Prostate gland (tissue), 2 donors: ENCODE measurements at regions of chr12 and their contacts with region 1.

Region 1: DNA sequence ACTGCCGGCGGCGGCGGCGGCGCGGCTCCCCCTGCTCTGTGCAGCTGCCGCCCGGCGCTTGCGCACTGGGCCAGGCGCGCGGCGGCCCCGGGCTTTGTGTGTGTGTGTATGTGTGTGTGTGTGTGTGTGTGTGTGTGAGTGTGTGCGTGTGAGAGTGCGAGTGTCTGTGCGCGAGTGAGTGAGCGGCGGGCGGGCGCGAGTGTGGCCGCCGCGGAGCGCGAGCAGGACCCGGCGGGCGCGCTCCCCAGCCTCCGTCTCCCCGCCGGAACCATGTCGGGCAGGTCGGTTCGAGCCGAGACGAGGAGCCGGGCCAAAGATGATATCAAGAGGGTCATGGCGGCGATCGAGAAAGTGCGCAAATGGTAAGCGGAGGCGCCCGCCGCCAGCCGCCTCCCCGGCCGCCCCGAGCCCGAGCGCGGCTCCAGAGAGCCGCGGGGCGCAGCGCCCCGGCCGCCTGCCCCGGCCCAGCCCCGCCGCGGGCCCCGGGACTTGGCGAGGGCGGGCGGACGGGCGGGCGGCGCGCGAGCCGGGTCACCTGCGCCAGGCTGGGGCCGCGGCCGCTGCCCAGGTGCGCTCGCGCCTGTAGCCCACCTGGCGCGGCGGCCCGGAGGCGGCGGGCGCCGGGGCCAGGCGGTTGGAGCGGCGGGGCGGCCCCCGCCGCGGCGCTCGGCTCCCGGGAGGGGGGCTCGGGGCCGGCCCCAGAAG is at the start of gene BCL7A:
- DNase-seq: peak; percentile 65
- H3K4me3 ChIP-seq: peak within 1 kb of the TSS; percentile 58
- H3K27ac ChIP-seq: peak within 1 kb of the TSS; percentile 85 to 91
- H3K4me1 ChIP-seq: peaks cover 8% of the 10 kb centered on the region
- H3K27me3 ChIP-seq: no peaks in the 10 kb centered on the region
- CTCF ChIP-seq: no peak
- POLR2A ChIP-seq: peak; percentile 74
- total RNA-seq, gene BCL7A: 10.3 to 15.4 TPM

Region 2: GRCh38 chr12:121964813-121965643 is 56.9 kb before region 1 on chr12:
- intact Hi-C with region 1: loop called (anchors 5 kb)
- DNase-seq: no peak
- H3K4me3 ChIP-seq: no peak overlapping the region
- H3K27ac ChIP-seq: no peak overlapping the region
- H3K4me1 ChIP-seq: no peaks in the 10 kb centered on the region
- H3K27me3 ChIP-seq: peaks cover 7% of the 10 kb centered on the region
- CTCF ChIP-seq: no peak
- POLR2A ChIP-seq: no peak